BJ (cell line): ENCODE measurements at regions of chr1 and their contacts with region 1.

Region 1: DNA sequence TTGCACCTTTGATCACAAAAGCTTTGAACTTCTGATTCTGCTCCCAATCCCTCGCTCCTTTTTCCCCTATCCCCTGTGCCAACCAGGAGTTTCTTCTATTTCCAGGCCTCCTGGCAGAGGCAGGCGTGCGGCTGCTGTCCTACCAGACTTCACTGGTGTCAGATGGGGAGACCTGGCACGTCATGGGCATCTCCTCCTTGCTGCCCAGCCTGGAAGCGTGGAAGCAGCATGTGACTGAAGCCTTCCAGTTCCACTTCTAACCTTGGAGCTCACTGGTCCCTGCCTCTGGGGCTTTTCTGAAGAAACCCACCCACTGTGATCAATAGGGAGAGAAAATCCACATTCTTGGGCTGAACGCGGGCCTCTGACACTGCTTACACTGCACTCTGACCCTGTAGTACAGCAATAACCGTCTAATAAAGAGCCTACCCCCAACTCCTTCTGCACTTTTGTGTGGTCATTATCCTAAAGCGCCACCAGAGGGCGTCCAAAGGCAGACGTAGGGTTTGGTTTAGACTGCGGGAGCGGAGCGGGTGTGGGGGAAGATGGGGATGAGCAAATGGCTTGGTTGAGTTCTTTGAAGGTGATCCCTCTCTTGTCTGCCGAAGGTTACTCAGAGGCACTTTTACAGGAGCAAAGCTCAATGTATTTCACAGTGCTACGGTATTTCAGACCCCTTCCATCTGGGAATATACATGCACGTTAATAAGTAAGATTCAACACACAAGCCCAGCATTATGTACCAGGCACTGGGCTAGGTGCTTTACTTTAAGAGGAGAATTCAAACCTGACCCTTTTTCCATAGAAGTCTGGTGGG is 24.7 kb downstream of the HMGCS2 start:
- DNase-seq: peak; percentile 2
- H3K4me3 ChIP-seq: no peak overlapping the region
- H3K27me3 ChIP-seq: no peaks in the 10 kb centered on the region
- CTCF ChIP-seq: peak; percentile 84

Region 2: DNA sequence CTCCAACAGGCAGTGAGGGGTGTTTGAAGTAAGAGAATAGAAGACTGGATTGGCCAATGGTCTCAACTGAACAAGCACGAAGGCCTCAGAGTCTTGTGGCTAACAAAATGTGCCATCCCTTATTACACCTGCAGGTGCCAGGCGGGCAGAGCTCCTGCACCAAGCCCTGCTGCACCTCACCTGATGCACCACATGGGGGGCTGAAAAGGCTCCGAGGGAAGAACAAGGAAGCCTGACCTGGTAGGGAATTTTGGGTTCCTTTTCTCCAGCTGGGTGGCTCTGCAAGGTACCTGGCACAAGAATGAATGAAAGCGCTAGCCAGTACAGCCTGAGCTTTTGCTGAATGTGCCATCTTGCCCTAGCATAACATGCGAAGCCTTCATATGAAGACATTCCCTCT is 227.3 kb before region 1 on chr1:
- CTCF ChIA-PET with region 1: no interaction called
- POLR2A ChIA-PET with region 1: no interaction called
- DNase-seq: no peak
- H3K4me3 ChIP-seq: no peak overlapping the region
- H3K27me3 ChIP-seq: no peaks in the 10 kb centered on the region
- CTCF ChIP-seq: no peak

Region 3: GRCh38 chr1:119758584-119758983 is 14.6 kb after region 1 on chr1:
- CTCF ChIA-PET with region 1: interaction called, 20 read pairs
- POLR2A ChIA-PET with region 1: no interaction called
- DNase-seq: no peak
- H3K4me3 ChIP-seq: no peak overlapping the region
- H3K27me3 ChIP-seq: peaks cover 5% of the 10 kb centered on the region
- CTCF ChIP-seq: no peak

Region 4: GRCh38 chr1:119766374-119766794 is 22.4 kb after region 1 on chr1:
- CTCF ChIA-PET with region 1: interaction called, 18 read pairs
- POLR2A ChIA-PET with region 1: no interaction called
- DNase-seq: no peak
- H3K4me3 ChIP-seq: no peak overlapping the region
- H3K27me3 ChIP-seq: peaks cover 16% of the 10 kb centered on the region
- CTCF ChIP-seq: no peak

Region 5: DNA sequence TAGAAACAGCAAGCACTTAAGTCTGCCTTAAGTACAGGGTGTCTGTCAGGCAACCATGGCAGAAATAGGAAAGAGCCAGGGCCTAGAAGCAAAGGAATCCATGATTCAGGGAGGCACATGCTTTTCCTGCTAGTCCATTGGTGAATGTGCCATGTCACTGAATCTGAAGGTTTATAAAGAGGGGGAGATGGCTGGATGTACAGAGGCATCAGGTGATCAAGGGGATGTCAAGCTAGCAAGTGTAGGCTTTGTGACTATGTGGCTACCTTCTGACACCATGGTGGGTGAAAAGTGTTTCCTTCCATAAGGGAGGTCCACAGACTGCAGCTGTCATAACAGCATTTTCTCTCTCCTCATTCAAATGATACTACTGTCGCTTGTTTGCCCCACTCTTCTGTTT is 59.9 kb after region 1 on chr1:
- CTCF ChIA-PET with region 1: interaction called, 22 read pairs
- POLR2A ChIA-PET with region 1: no interaction called
- DNase-seq: no peak
- H3K4me3 ChIP-seq: no peak overlapping the region
- H3K27me3 ChIP-seq: peaks cover 12% of the 10 kb centered on the region
- CTCF ChIP-seq: no peak

Region 6: GRCh38 chr1:119808972-119809550 is 65.1 kb after region 1 on chr1:
- CTCF ChIA-PET with region 1: interaction called, 22 read pairs
- POLR2A ChIA-PET with region 1: no interaction called
- DNase-seq: no peak
- H3K4me3 ChIP-seq: no peak overlapping the region
- H3K27me3 ChIP-seq: peaks cover 7% of the 10 kb centered on the region
- CTCF ChIP-seq: peak; percentile 98

Region 7: GRCh38 chr1:119870917-119871596 is 127.1 kb after region 1 on chr1:
- CTCF ChIA-PET with region 1: interaction called, 28 read pairs
- POLR2A ChIA-PET with region 1: no interaction called
- DNase-seq: no peak
- H3K4me3 ChIP-seq: no peak overlapping the region
- H3K27me3 ChIP-seq: no peaks in the 10 kb centered on the region
- CTCF ChIP-seq: peak; percentile 98

Region 8: GRCh38 chr1:119917304-119918055 is 173.5 kb after region 1 on chr1:
- CTCF ChIA-PET with region 1: no interaction called
- POLR2A ChIA-PET with region 1: no interaction called
- DNase-seq: no peak
- H3K4me3 ChIP-seq: no peak overlapping the region
- H3K27me3 ChIP-seq: no peaks in the 10 kb centered on the region
- CTCF ChIP-seq: no peak